ENCODE measurements at regions of chr1 and their contacts with region 1.

Region 1: GRCh38 chr1:231421993-231422764 is at the start of gene EGLN1:
- DNase-seq: peak; percentile 72 to 91
- H3K4me3 ChIP-seq: peak within 1 kb of the TSS; percentile 80 to 94
- H3K27ac ChIP-seq: peak within 1 kb of the TSS; percentile 97 to 99
- H3K4me1 ChIP-seq: peaks cover 0 to 35% (median 14%) of the 10 kb centered on the region in 4 donors
- H3K27me3 ChIP-seq: no peaks in the 10 kb centered on the region
- CTCF ChIP-seq: peak in 1 of 2 experiments; percentile 29

Region 2: DNA sequence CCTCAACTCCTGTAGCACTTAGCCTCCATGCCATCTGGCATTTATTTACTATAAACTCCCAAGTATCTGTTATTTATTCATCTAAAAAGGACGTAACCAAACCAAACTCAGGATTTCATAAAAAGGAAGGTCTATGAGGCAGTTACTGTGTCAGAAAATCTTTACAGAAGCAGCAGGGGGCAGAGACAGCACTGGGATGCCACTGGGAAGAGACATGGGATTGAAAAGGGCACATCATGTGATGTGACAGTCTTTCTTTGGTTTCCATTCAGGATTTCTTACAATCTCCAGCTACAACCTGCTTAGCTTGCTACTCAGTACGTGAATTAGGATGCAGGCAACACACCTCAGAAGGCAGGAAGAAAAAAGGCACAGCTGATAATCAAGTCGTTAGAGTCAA is 52.9 kb before region 1 on chr1:
- intact Hi-C with region 1: loop called (anchors 10 kb)
- DNase-seq: no peak
- H3K4me3 ChIP-seq: no peak overlapping the region
- H3K27ac ChIP-seq: no peak overlapping the region
- H3K4me1 ChIP-seq: no peaks in the 10 kb centered on the region
- H3K27me3 ChIP-seq: no peaks in the 10 kb centered on the region
- CTCF ChIP-seq: no peak

Region 3: DNA sequence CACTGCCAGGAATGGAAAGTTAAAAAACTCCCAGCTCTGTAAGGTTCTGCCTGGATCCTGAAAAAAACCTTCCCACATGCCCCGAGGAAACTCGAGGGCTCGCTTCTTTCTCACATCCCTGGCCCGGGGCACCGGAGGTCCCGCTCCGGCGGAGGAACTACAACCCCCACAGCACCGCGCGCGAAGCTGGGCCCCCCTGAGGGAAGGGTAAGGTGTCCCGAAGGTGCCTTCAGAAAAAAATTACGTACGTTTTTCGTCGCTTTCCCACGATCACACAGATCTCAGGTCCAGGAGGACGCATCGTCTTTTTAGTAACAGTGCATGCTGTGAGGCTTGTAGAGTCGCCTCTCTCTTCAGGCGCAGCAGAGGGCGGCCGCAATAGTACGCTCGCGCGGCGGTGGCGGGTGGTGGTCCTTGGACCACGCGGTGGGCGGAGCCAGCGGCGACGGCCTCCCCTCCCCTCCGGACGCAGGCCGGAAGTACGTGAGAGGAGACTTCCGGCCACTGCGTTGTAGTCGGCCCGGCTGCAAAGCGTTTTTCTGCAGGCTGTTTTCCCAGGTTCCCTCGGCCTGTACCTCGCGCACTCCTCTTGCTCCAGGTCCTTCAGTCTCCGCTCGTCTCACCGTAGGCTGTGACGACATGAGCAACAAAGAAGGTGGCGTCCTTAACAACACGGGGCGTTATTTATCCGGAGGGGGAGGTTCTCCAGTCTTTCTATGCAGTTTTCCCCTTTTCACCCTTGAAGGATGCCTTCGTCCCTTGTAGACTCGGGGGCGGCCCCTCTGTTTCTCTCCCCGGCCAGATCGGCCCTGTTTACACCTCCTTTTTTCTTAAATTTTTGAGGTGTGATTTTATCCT is 106.2 kb after region 1 on chr1 and contains the start of gene TSNAX:
- intact Hi-C with region 1: loop called (anchors 5 kb)
- DNase-seq: peak; percentile 87 to 94
- H3K4me3 ChIP-seq: peak within 1 kb of the TSS; percentile 81 to 87
- H3K27ac ChIP-seq: peak within 1 kb of the TSS; percentile 92 to 94
- H3K4me1 ChIP-seq: peaks cover 0 to 42% (median 14%) of the 10 kb centered on the region in 4 donors
- H3K27me3 ChIP-seq: no peaks in the 10 kb centered on the region
- CTCF ChIP-seq: no peak

Measured in tibial artery (tissue), 4 donors.